ENCODE measurements at regions of chr9 and their contacts with region 1.

Region 1: DNA sequence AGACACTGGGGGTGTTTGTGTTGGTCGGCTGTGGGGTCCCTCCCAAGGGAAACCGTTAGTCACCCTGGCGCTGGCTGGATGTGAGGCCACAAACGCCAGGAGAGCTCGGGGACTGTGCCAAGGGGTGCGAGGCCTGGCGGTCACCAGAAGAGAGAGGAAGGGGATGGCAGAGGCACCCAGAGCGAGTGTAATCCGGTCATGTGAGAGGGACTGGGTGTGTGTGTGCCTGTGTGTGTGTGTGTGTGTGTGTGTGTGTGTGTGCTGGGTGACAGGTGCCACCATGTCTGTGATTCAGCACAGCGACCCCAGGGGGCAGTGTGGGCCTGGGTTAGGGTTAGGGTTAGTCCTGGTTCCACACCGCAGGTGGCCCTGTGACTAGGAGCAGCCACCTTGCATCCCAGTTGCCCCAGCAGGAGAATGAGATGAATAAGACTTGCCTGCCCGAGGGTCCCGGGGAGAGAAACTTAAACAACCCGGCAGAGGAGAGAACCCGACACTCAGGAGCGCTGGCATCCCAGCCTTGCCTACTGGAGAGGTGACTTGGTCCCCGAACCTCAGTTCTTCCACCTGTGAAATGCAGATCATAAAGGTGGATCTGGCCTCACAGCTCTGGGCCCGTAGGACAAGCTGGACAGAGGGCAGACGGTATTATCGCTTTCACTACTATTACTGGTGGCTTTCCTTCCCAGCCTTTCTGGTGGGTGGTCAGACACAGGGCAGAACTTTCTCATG is 1.4 kb upstream of the ADAMTSL2 start:
- DNase-seq: peak; percentile 76 to 91
- ATAC-seq: peak; percentile 42
- H3K4me3 ChIP-seq: no peak overlapping the region
- H3K27ac ChIP-seq: no peak overlapping the region
- H3K4me1 ChIP-seq: no peaks in the 10 kb centered on the region
- H3K27me3 ChIP-seq: no peaks in the 10 kb centered on the region

Region 2: GRCh38 chr9:133589454-133590227 is 56.5 kb after region 1 on chr9:
- intact Hi-C with region 1: no loop called
- DNase-seq: no peak
- ATAC-seq: no peak
- H3K4me3 ChIP-seq: no peak overlapping the region
- H3K27ac ChIP-seq: no peak overlapping the region
- H3K4me1 ChIP-seq: no peaks in the 10 kb centered on the region
- H3K27me3 ChIP-seq: no peaks in the 10 kb centered on the region

Region 3: GRCh38 chr9:133726401-133727276 is 193.5 kb after region 1 on chr9:
- intact Hi-C with region 1: loop called (anchors 5 to 10 kb)
- DNase-seq: peak; percentile 49 to 78
- ATAC-seq: peak; percentile 44
- H3K4me3 ChIP-seq: no peak overlapping the region
- H3K27ac ChIP-seq: no peak overlapping the region
- H3K4me1 ChIP-seq: no peaks in the 10 kb centered on the region
- H3K27me3 ChIP-seq: no peaks in the 10 kb centered on the region

Region 4: DNA sequence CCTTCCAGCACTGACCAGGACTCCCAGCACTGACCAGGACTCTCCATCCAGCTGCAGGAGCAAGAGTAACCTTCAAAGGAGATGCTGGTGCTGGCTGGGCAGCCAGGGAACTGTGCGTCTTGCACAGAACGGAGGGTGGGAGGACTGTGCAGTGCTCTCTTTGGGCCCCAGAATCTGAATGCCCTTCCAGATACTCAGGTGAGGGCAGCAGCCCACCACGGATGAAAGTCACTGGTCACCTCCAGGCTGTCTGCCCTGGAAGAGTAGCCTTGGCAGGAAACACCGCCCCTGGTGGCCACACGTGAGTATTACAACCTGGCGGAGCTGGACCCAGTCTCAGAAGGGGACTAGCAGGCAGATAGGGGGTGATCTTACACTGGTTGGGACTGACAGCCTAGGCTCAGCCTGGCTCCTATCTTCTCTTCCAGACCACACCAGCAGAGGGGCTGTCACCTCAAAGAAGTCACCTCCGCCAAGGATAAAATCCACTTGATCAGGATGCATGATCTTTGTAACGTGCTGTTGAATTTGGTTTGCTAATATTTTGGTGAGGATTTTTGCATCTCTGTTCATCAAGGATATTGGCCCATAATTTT is 209.8 kb after region 1 on chr9:
- intact Hi-C with region 1: loop called in 1 of 2 experiments (anchors 5 kb)
- DNase-seq: peak; percentile 70 to 92
- ATAC-seq: peak; percentile 79
- H3K4me3 ChIP-seq: no peak overlapping the region
- H3K27ac ChIP-seq: no peak overlapping the region
- H3K4me1 ChIP-seq: no peaks in the 10 kb centered on the region
- H3K27me3 ChIP-seq: no peaks in the 10 kb centered on the region